Mammary epithelial cell (primary cell): ENCODE measurements at regions of chr12 and their contacts with region 1.

Region 1: GRCh38 chr12:53213348-53213747 is 6.3 kb upstream of the ITGB7 start:
- DNase-seq: no peak
- H3K4me3 ChIP-seq: no peak overlapping the region
- H3K27ac ChIP-seq: no peak overlapping the region
- H3K4me1 ChIP-seq: peaks cover 22% of the 10 kb centered on the region
- H3K27me3 ChIP-seq: no peaks in the 10 kb centered on the region
- CTCF ChIP-seq: peak; percentile 71 to 95

Region 2: DNA sequence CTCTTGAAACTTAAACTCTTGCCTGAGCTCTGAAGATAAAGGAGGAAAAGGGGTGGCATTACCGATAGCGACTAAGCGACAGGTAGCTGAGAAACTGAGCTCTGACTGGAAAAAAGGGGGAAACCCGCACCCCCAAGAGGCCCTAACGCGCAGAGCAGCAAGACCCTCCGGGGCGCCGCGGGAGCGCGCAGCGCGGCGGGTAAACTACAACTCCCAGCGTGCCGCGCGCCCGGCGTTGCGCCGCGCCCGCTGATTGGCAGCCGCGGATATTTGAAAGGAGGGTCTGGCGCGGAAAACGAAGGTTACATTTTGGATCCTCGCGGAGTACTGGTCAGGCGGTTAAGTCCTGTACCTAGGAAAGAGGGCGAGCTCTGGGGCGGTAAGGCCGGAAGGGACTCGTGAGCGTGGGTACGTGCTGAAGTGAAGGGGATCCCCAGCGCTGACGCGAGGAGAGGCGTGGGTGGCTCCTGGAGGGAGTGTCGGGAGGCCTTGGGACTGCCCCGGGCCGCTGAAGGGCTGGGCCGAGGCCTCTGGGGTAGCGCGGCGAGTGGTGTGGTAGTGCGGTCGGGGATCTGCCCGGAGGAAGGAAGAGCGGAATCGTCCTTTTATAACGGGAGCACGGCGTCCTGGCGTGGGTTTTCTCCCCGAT is 54.8 kb after region 1 on chr12 and contains the start of gene ESPL1:
- CTCF ChIA-PET with region 1: no interaction called
- dilution Hi-C with region 1: loop called (anchors 10 kb)
- in situ Hi-C with region 1: loop called in 1 of 2 experiments (anchors 10 kb)
- intact Hi-C with region 1: loop called (anchors 1 kb)
- DNase-seq: peak; percentile 83
- H3K4me3 ChIP-seq: peak within 1 kb of the TSS; percentile 88 to 98 (median 96)
- H3K27ac ChIP-seq: peak within 1 kb of the TSS; percentile 91
- H3K4me1 ChIP-seq: peaks cover 18% of the 10 kb centered on the region
- H3K27me3 ChIP-seq: no peaks in the 10 kb centered on the region
- CTCF ChIP-seq: peak; percentile 13 to 15
- total RNA-seq, gene ESPL1: 0.67 to 19.7 TPM

Region 3: GRCh38 chr12:53287741-53288216 is 74.4 kb after region 1 on chr12:
- CTCF ChIA-PET with region 1: interaction called, 3 read pairs
- dilution Hi-C with region 1: loop called (anchors 5 kb)
- in situ Hi-C with region 1: no loop called
- intact Hi-C with region 1: loop called (anchors 1 kb)
- DNase-seq: peak; percentile 43
- H3K4me3 ChIP-seq: no peak overlapping the region
- H3K27ac ChIP-seq: no peak overlapping the region
- H3K4me1 ChIP-seq: no peaks in the 10 kb centered on the region
- H3K27me3 ChIP-seq: no peaks in the 10 kb centered on the region
- CTCF ChIP-seq: peak; percentile 51 to 80